ENCODE measurements at regions of chr3 and their contacts with region 1.

Region 1: DNA sequence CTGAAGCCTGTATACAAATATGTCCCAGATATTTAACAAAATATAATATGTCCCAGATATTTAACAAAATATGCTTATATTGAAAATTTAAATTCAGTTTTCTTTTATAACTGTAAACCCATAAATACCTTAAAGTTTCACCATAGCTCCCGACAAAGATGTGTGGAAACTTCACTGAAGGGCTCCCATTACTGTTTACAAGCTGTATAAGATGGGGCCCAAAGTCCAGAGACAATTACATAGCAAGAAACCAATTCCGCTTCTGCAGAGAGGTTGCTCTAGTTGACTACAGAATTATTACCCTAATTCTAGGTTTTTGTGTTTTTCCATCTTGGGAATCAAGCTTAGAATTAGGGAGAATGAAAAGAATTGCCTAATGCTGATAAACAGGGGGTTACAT is 102.6 kb upstream of the EPHA6 start:
- DNase-seq: no peak
- ATAC-seq: no peak
- H3K4me3 ChIP-seq: no peak overlapping the region
- H3K27ac ChIP-seq: no peak overlapping the region
- H3K4me1 ChIP-seq: peaks cover 5% of the 10 kb centered on the region
- H3K27me3 ChIP-seq: no peaks in the 10 kb centered on the region
- CTCF ChIP-seq: no peak

Region 2: GRCh38 chr3:96750094-96750767 is 38.4 kb after region 1 on chr3:
- CTCF ChIA-PET with region 1: no interaction called
- POLR2A ChIA-PET with region 1: no interaction called
- intact Hi-C with region 1: loop called (anchors 2 kb)
- DNase-seq: no peak
- ATAC-seq: no peak
- H3K4me3 ChIP-seq: no peak overlapping the region
- H3K27ac ChIP-seq: no peak overlapping the region
- H3K4me1 ChIP-seq: no peaks in the 10 kb centered on the region
- H3K27me3 ChIP-seq: no peaks in the 10 kb centered on the region
- CTCF ChIP-seq: no peak

Measured in PC-3 (cell line).